ENCODE measurements at regions of chr15 and their contacts with region 1.

Region 1: DNA sequence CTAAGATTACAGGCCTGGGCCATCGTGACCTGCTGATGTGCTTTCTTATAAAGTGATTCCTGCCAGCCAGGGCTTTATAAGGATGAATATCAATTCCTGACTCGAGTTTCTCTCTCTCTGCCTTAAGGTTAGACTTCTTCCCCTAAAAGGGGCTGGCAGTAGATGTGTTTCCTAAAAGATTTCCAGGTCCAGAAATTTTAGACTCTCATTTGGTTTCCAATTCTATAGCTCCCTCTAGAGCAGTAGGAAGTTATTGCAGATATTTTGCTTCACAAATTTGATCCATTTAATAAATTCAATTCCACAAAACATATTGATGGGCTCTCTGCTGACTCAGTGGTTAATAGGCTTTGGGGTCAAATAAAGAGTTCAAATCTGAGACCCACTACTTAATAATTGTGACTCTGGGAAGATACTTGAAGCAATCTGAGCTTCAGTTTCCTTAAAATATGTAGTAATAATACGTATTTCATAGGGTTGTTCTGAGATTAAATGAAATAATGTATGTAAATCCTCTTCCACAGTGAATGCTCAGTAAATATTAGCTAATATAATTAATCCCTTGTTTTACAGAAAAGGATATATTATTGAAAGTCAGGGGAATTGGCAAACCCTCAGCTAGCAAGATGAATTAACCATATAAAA is 2.1 kb downstream of the TRIM69 start:
- DNase-seq: peak in 2 of 5 donors; percentile 61 to 64
- H3K4me3 ChIP-seq: no peak overlapping the region
- H3K4me3 Mint-ChIP-seq: peak overlapping the region; percentile 24 to 81 (median 51)
- H3K27ac ChIP-seq: no peak overlapping the region
- H3K27ac Mint-ChIP-seq: peak overlapping the region; percentile 18 to 88 (median 81)
- H3K4me1 ChIP-seq: peaks cover 54% of the 10 kb centered on the region
- H3K4me1 Mint-ChIP-seq: peaks cover 50 to 62% (median 60%) of the 10 kb centered on the region in 3 donors
- H3K27me3 ChIP-seq: no peaks in the 10 kb centered on the region
- H3K27me3 Mint-ChIP-seq: peaks cover 0 to 2% of the 10 kb centered on the region in 2 donors

Region 2: DNA sequence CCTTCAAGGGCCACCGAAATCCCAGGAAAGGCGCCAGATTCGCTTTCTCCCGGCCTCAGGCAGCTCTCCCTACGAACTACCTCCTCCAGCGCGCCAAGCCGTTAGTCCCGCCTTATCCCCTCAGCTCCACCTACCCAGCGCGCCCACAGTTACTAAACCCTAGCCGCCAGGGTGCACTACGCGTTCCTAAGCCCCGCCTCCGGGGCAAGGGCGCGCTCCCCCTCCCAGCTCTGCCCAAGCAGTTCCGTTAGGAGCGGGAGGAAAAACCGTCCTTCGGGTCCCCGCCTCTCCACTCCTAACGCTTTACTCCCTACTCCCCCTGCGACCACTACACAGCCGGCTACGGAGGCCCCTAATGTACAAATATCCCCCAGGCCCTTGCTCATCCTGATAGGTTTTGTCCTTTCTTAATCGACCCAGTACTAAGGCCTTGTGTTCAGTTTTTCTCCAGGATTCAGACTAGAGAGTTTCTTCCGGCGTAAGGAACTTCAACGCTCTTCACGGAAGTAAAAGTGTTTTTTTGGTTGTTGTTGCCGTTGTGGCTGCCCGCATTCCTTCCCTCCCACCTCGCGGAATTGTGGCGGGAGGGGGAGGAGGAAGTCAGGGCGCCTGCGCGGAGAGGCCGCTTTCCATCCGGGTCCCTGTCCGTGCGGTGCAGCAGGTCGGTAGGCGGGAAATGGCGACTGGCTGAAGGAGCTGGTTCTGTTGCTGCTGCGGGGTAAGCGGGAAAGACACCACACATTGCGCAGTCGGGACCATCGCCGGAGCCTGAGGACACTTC is 311.3 kb before region 1 on chr15 and contains the start of gene CTDSPL2:
- CTCF ChIA-PET with region 1: no interaction called
- POLR2A ChIA-PET with region 1: interaction called, 13 read pairs
- DNase-seq: peak; percentile 91 to 96 (median 93)
- H3K4me3 ChIP-seq: peak within 1 kb of the TSS; percentile 91
- H3K4me3 Mint-ChIP-seq: peak within 1 kb of the TSS; percentile 96 to 100 (median 98)
- H3K27ac ChIP-seq: peak within 1 kb of the TSS; percentile 95
- H3K27ac Mint-ChIP-seq: peak within 1 kb of the TSS; percentile 97 to 100 (median 99)
- H3K4me1 ChIP-seq: peaks cover 24% of the 10 kb centered on the region
- H3K4me1 Mint-ChIP-seq: peaks cover 46 to 69% (median 60%) of the 10 kb centered on the region in 3 donors
- H3K27me3 ChIP-seq: no peaks in the 10 kb centered on the region
- H3K27me3 Mint-ChIP-seq: peaks cover 0 to 9% of the 10 kb centered on the region in 2 donors
- total RNA-seq, gene CTDSPL2: 63.0 to 69.8 TPM

Region 3: DNA sequence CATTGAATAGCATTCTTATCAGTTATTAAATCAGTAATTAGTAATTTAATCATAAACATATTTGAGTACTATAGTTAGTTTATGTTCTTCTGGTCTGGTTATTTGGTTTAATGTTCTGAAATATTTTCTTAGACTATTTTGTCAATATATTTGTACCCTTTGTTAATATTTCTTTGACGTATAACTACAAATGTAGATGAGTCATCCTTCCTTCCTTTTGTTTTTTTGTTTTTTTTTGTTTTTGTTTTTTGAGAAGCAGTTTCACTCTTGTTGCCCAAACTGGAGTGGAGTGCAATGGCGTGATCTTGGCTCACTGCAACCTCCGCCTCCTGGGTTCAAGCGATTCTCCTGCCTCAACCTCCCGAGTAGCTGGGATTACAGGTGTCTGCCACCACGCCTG is 218.9 kb before region 1 on chr15:
- CTCF ChIA-PET with region 1: no interaction called
- POLR2A ChIA-PET with region 1: no interaction called
- DNase-seq: no peak
- H3K4me3 ChIP-seq: no peak overlapping the region
- H3K4me3 Mint-ChIP-seq: no peak overlapping the region
- H3K27ac ChIP-seq: no peak overlapping the region
- H3K27ac Mint-ChIP-seq: peak overlapping the region in 1 of 8 donors; percentile 61
- H3K4me1 ChIP-seq: no peaks in the 10 kb centered on the region
- H3K4me1 Mint-ChIP-seq: peaks cover 2 to 7% (median 7%) of the 10 kb centered on the region in 3 donors
- H3K27me3 ChIP-seq: no peaks in the 10 kb centered on the region
- H3K27me3 Mint-ChIP-seq: no peaks in the 10 kb centered on the region

Region 4: GRCh38 chr15:44573386-44573785 is 165.1 kb before region 1 on chr15:
- CTCF ChIA-PET with region 1: interaction called, 16 read pairs
- POLR2A ChIA-PET with region 1: interaction called, 11 read pairs
- DNase-seq: no peak
- H3K4me3 ChIP-seq: no peak overlapping the region
- H3K4me3 Mint-ChIP-seq: no peak overlapping the region
- H3K27ac ChIP-seq: no peak overlapping the region
- H3K27ac Mint-ChIP-seq: peak overlapping the region in 3 of 8 donors; percentile 19 to 70 (median 23)
- H3K4me1 ChIP-seq: peaks cover 4% of the 10 kb centered on the region
- H3K4me1 Mint-ChIP-seq: peaks cover 5 to 12% (median 6%) of the 10 kb centered on the region in 3 donors
- H3K27me3 ChIP-seq: no peaks in the 10 kb centered on the region
- H3K27me3 Mint-ChIP-seq: no peaks in the 10 kb centered on the region

Region 5: DNA sequence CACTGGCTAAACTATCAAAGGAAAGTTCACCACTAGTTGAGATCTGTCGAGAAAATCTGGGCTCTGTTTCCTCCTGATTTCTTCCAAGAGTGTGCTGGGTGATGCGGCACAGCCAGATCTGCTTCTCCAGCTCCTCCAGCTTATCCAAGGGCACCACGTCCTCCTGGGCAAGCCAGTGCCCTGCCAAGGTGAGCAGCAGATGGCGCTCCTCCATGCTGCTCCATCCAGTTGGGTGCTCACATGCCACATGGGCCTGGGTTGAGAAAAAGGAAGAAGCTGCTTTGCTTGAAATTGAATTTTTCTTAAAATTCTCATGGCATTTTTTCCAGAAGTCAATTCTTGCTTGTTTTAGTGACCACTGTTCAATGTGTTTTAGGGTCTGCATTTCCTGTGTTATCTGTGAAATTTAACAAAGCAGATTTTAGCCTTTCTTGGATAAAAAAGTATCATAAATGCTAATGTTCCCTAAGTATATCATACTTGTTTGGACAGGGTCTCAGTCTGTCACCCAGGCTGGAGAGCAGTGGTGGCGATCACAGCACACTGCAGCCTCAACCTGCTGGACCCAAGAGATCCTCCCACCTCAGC is 154.2 kb before region 1 on chr15:
- CTCF ChIA-PET with region 1: interaction called, 19 read pairs
- POLR2A ChIA-PET with region 1: interaction called, 3 read pairs
- DNase-seq: peak; percentile 21 to 71 (median 35)
- H3K4me3 ChIP-seq: no peak overlapping the region
- H3K4me3 Mint-ChIP-seq: no peak overlapping the region
- H3K27ac ChIP-seq: no peak overlapping the region
- H3K27ac Mint-ChIP-seq: peak overlapping the region in 5 of 8 donors; percentile 7 to 92 (median 64)
- H3K4me1 ChIP-seq: peaks cover 3% of the 10 kb centered on the region
- H3K4me1 Mint-ChIP-seq: peaks cover 8 to 30% (median 19%) of the 10 kb centered on the region in 3 donors
- H3K27me3 ChIP-seq: no peaks in the 10 kb centered on the region
- H3K27me3 Mint-ChIP-seq: no peaks in the 10 kb centered on the region

Region 6: DNA sequence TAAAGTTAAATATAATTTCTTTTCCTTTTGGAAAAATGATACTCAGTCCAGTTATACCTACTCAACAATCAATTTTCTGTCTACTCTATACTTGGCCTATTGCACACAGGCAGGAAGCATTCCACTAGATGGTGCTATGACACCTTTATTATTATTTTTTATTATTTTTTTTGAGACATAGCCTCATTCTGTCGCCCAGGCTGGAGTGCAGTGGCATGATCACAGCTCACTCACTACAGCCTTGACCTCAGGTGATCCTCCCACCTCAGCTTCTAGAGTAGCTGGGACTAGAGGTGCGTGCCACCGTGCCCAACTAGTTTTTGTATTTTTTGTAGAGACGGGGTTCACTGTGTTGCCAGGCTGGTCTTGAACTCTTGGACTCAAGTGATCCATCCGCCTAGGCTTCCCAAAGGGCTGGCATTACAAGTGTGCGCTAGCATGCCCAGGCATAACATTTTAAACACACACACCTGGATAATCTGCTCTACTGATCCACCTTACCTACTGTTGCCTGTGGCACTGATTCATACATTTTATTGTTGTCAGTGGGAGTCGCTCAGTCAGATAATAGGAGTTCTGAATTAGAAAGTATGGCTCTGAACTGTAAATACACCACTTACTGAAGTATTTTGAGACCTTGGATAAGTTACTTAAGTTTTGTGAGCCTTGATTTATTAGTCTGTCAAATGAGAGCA is 145.3 kb before region 1 on chr15:
- CTCF ChIA-PET with region 1: interaction called, 35 read pairs
- POLR2A ChIA-PET with region 1: no interaction called
- DNase-seq: peak in 3 of 5 donors; percentile 43 to 48 (median 44)
- H3K4me3 ChIP-seq: no peak overlapping the region
- H3K4me3 Mint-ChIP-seq: no peak overlapping the region
- H3K27ac ChIP-seq: no peak overlapping the region
- H3K27ac Mint-ChIP-seq: peak overlapping the region in 5 of 8 donors; percentile 47 to 89 (median 70)
- H3K4me1 ChIP-seq: peaks cover 6% of the 10 kb centered on the region
- H3K4me1 Mint-ChIP-seq: peaks cover 4 to 24% (median 11%) of the 10 kb centered on the region in 3 donors
- H3K27me3 ChIP-seq: no peaks in the 10 kb centered on the region
- H3K27me3 Mint-ChIP-seq: no peaks in the 10 kb centered on the region

Region 7: GRCh38 chr15:44682211-44682610 is 56.3 kb before region 1 on chr15:
- CTCF ChIA-PET with region 1: interaction called, 15 read pairs
- POLR2A ChIA-PET with region 1: interaction called, 5 read pairs
- DNase-seq: no peak
- H3K4me3 ChIP-seq: peak overlapping the region; percentile 3
- H3K4me3 Mint-ChIP-seq: peak overlapping the region in 6 of 7 donors; percentile 62 to 75 (median 72)
- H3K27ac ChIP-seq: peak overlapping the region; percentile 70
- H3K27ac Mint-ChIP-seq: peak overlapping the region; percentile 84 to 97 (median 90)
- H3K4me1 ChIP-seq: peaks cover 72% of the 10 kb centered on the region
- H3K4me1 Mint-ChIP-seq: peaks cover 88 to 97% (median 96%) of the 10 kb centered on the region in 3 donors
- H3K27me3 ChIP-seq: no peaks in the 10 kb centered on the region
- H3K27me3 Mint-ChIP-seq: peaks cover 0 to 2% of the 10 kb centered on the region in 2 donors

Region 8: GRCh38 chr15:44711356-44712107 is 26.9 kb before region 1 on chr15 and contains the start of gene B2M:
- CTCF ChIA-PET with region 1: interaction called, 242 read pairs
- POLR2A ChIA-PET with region 1: interaction called, 728 read pairs
- DNase-seq: peak; percentile 90 to 99 (median 96)
- H3K4me3 ChIP-seq: peak within 1 kb of the TSS; percentile 79
- H3K4me3 Mint-ChIP-seq: peak within 1 kb of the TSS; percentile 96 to 100 (median 100)
- H3K27ac ChIP-seq: peak within 1 kb of the TSS; percentile 100
- H3K27ac Mint-ChIP-seq: peak within 1 kb of the TSS; percentile 99 to 100 (median 100)
- H3K4me1 ChIP-seq: peaks cover 48% of the 10 kb centered on the region
- H3K4me1 Mint-ChIP-seq: peaks cover 41 to 54% (median 51%) of the 10 kb centered on the region in 3 donors
- H3K27me3 ChIP-seq: no peaks in the 10 kb centered on the region
- H3K27me3 Mint-ChIP-seq: peaks cover 0 to 20% of the 10 kb centered on the region in 2 donors
- total RNA-seq, gene B2M: 4,597 to 4,837 TPM

Region 9: DNA sequence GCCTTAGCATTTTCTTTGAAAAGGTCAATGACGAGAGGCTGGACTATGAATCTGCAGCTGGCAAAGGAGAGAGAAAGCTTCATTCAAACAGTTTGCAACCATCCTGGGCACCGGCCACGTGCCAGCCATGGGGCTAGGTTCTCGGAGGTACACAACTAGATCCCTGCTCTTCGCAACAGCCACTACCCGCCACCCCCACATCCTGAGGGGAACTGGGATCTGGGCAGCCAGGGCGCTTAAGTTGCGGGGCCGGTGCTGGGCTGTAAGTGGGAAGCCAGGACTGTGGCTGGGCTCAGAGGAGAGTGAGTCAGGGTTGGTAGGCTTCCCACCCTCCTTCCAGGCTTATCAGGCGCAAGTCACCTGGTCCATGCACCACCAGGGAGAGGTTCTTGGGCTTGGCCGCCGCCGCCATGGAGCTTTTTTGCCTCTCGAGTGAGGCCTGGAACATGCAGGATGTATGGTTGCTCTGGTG is 123.0 kb after region 1 on chr15:
- CTCF ChIA-PET with region 1: no interaction called
- POLR2A ChIA-PET with region 1: no interaction called
- DNase-seq: no peak
- H3K4me3 ChIP-seq: no peak overlapping the region
- H3K4me3 Mint-ChIP-seq: no peak overlapping the region
- H3K27ac ChIP-seq: no peak overlapping the region
- H3K27ac Mint-ChIP-seq: peak overlapping the region in 1 of 8 donors; percentile 33
- H3K4me1 ChIP-seq: no peaks in the 10 kb centered on the region
- H3K4me1 Mint-ChIP-seq: no peaks in the 10 kb centered on the region
- H3K27me3 ChIP-seq: no peaks in the 10 kb centered on the region
- H3K27me3 Mint-ChIP-seq: peaks cover 0 to 2% of the 10 kb centered on the region in 2 donors

Region 10: GRCh38 chr15:44882499-44882968 is 144.1 kb after region 1 on chr15:
- CTCF ChIA-PET with region 1: no interaction called
- POLR2A ChIA-PET with region 1: no interaction called
- DNase-seq: no peak
- H3K4me3 ChIP-seq: no peak overlapping the region
- H3K4me3 Mint-ChIP-seq: peak overlapping the region in 3 of 7 donors; percentile 2 to 34 (median 5)
- H3K27ac ChIP-seq: no peak overlapping the region
- H3K27ac Mint-ChIP-seq: peak overlapping the region in 1 of 8 donors; percentile 1
- H3K4me1 ChIP-seq: no peaks in the 10 kb centered on the region
- H3K4me1 Mint-ChIP-seq: peaks cover 7 to 23% (median 18%) of the 10 kb centered on the region in 3 donors
- H3K27me3 ChIP-seq: no peaks in the 10 kb centered on the region
- H3K27me3 Mint-ChIP-seq: peaks cover 5 to 9% of the 10 kb centered on the region in 2 donors

Measured in CD8-positive, alpha-beta memory T cell (primary cell).